Activated CD4-positive, alpha-beta T cell treated with anti-CD3 and anti-CD28 coated beads, Interleukin-2, amount 10 ng/mL, durations not matched to agents 7 days and 5 days (primary cell): ENCODE measurements at regions of chr16 and their contacts with region 1.

Region 1: DNA sequence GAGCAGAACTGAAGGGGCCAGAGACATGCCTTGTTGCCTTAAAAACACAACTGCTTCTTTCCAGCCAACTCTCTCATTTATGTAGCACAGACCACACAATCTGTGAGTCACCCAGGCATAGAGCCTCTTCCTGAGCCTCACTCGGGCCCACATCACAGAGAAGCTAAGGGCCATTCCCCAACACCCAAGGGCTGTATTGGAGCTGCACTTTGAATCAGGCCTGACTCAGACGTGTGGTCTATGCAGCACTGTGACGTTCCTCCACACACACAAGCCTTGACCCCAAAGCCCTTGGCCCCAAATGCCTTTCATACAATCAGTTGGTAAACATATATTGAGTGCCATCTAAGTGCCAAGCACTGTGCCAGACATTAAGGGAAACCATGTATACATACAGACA is 308.9 kb upstream of the DYNLRB2 start:
- DNase-seq: no peak
- H3K4me3 Mint-ChIP-seq: no peak overlapping the region
- H3K27ac Mint-ChIP-seq: no peak overlapping the region
- H3K4me1 Mint-ChIP-seq: no peaks in the 10 kb centered on the region
- H3K27me3 Mint-ChIP-seq: peaks cover 3% of the 10 kb centered on the region

Region 2: DNA sequence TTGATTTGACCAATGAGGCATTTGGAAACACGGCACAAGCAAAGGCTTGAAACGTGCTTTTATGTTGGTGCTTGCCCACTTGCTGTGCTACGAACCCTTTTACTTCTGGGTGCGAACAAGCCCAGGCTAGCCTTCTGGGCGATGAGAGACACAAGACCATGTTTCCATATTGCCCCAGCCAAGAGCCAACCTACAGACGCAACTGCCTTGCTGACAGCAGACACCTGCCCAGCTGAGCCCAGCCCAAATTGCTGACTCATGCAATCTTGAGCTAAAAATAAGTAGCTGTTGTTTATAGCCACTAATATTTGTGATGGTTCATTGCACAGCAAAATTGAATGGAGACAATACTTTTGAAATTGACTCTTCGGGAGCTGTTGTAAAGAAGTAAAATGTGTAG is 1668.0 kb before region 1 on chr16:
- CTCF ChIA-PET with region 1: no interaction called
- POLR2A ChIA-PET with region 1: interaction called, 11 read pairs
- DNase-seq: no peak
- H3K4me3 Mint-ChIP-seq: no peak overlapping the region
- H3K27ac Mint-ChIP-seq: no peak overlapping the region
- H3K4me1 Mint-ChIP-seq: peaks cover 11% of the 10 kb centered on the region
- H3K27me3 Mint-ChIP-seq: no peaks in the 10 kb centered on the region

Region 3: DNA sequence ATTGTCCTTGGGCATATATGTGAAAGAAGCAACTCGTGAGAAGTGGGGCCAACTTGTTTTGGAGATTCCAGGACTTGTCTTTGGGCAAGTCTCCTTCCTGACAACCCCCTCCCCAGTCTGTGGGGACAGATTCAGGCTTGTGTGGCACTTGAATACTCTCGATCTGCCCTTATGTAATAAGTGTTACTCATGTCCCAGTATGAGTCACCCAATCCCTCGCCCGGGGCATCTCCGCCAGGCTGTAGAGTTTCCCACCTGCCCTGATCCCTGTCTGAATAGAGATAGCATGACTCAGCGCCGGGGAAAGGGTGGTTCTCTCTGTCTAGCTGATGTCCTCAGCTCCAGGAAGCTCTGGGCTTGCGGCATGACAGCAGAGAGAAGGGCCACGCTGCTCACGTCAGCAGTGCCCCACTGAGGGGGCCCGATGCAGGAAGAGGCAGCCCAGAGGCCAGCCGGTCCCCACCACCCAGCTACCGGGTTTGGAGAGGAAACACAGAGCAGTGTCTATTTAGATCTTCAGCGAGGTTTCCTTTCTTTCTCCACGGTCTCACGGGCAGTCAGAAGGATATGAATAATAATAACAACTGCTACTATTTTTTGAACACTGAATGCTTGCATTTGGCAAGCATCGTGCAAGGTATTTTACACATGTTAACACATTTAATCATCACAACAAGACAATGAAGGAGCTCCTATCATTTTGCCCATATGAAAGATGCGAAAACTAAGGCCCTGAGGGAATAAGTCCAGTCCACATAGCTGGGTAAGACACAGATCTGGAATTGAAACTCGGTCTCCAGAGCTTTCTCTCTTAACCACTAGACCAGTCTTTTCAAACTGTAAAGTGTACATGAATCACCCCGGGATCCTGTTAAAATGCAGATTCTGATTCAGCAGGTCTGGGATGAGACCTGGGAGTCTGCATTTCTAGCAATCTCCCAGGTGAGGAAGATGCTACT is 204.6 kb before region 1 on chr16:
- CTCF ChIA-PET with region 1: no interaction called
- POLR2A ChIA-PET with region 1: no interaction called
- DNase-seq: peak; percentile 30
- H3K4me3 Mint-ChIP-seq: no peak overlapping the region
- H3K27ac Mint-ChIP-seq: peak overlapping the region; percentile 7
- H3K4me1 Mint-ChIP-seq: peaks cover 9% of the 10 kb centered on the region
- H3K27me3 Mint-ChIP-seq: no peaks in the 10 kb centered on the region